ENCODE measurements at regions of chr17 and their contacts with region 1.

Region 1: DNA sequence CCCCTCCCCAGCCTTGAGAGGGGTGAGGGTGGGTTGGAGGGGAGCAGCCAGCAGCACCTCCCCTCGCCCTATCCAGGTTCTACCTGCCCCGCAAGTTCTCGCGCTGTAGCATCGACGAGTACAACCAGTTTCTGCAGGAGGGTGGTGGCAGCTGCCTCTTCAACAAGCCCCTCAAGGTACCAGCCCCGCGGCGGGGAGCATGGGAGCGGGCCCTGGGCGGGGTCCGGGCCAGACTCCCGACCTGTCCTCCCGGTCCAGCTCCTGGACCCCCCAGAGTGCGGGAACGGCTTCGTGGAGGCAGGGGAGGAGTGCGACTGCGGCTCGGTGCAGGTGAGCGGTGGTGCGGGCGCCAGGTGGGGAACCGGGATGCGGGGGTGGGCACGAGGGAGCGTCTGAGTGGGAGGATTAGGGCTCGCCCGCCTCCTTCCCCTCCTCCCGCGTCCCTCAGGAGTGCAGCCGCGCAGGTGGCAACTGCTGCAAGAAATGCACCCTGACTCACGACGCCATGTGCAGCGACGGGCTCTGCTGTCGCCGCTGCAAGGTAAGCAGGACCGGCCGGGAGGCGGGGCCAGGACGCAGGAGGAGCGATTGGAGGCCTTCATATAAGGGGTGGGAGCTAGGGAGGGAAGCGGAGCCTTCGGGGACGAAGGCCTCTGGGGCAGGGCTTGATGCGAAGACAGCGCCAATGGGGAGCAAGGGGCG is 16.5 kb downstream of the ADAM11 start:
- DNase-seq: no peak
- ATAC-seq: peak; percentile 97
- H3K4me3 Mint-ChIP-seq: peak overlapping the region; percentile 77
- H3K27ac Mint-ChIP-seq: no peak overlapping the region
- H3K4me1 Mint-ChIP-seq: peaks cover 7% of the 10 kb centered on the region
- H3K27me3 Mint-ChIP-seq: no peaks in the 10 kb centered on the region

Region 2: DNA sequence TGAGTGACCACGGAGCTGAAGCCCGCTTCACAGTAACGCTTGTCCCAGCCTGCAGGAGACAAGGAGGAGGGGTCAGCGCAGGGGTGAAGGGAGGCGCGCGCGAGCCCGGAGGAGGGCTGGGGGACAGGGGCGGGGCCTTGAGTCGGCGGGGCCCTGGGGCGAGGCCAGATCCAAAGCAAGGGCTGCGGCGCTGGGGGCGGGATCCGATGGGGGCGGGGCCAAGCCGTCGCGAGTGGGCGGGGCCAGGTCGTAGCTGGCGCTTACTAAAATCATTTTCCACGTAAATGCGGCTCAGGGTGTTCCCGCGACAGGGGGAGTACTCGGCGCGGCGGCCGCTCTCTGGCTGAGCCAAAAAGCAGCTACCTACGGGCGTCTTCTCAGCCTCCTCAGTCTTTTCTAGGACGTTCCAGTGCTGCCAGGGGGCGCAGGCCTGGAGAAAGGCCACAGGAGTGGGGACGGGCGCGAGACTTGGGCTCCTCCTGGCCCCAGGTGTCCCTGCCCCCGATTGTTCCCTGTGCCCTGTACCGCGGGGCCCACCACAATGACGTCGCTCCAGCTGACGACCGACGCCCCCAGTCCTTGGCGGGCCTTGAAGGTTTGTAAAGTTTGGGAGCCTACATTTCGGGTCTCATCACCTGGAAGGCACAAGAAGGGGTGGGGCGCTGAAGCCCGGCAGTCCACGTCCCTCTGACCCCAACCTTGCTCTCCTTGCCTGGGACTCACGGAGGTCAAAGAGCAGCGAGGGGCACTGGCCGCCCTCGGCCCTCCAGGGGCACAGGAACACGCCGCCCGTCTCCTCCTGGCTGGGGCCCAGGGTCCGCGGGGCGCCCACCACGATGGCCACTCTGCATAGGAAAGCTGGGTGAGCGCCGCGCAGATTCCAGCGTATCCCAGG is 389.8 kb before region 1 on chr17:
- CTCF ChIA-PET with region 1: no interaction called
- POLR2A ChIA-PET with region 1: no interaction called
- intact Hi-C with region 1: loop called in 1 of 2 experiments (anchors 1 kb)
- DNase-seq: peak; percentile 96
- ATAC-seq: peak; percentile 96
- H3K4me3 Mint-ChIP-seq: peak overlapping the region; percentile 62
- H3K27ac Mint-ChIP-seq: peak overlapping the region; percentile 21
- H3K4me1 Mint-ChIP-seq: peaks cover 12% of the 10 kb centered on the region
- H3K27me3 Mint-ChIP-seq: peaks cover 22% of the 10 kb centered on the region

Region 3: GRCh38 chr17:44797802-44798201 is 22.5 kb after region 1 on chr17:
- CTCF ChIA-PET with region 1: interaction called, 13 read pairs
- POLR2A ChIA-PET with region 1: no interaction called
- intact Hi-C with region 1: no loop called
- DNase-seq: no peak
- ATAC-seq: no peak
- H3K4me3 Mint-ChIP-seq: no peak overlapping the region
- H3K27ac Mint-ChIP-seq: no peak overlapping the region
- H3K4me1 Mint-ChIP-seq: peaks cover 7% of the 10 kb centered on the region
- H3K27me3 Mint-ChIP-seq: no peaks in the 10 kb centered on the region

Region 4: GRCh38 chr17:44864866-44865660 is 89.8 kb after region 1 on chr17:
- CTCF ChIA-PET with region 1: interaction called, 49 read pairs
- POLR2A ChIA-PET with region 1: interaction called, 8 read pairs
- intact Hi-C with region 1: loop called (anchors 1 kb)
- DNase-seq: peak; percentile 79
- ATAC-seq: peak; percentile 84
- H3K4me3 Mint-ChIP-seq: no peak overlapping the region
- H3K27ac Mint-ChIP-seq: no peak overlapping the region
- H3K4me1 Mint-ChIP-seq: no peaks in the 10 kb centered on the region
- H3K27me3 Mint-ChIP-seq: no peaks in the 10 kb centered on the region

Region 5: GRCh38 chr17:44968226-44969143 is 193.2 kb after region 1 on chr17 and contains the start of gene C1QL1:
- CTCF ChIA-PET with region 1: interaction called, 4 read pairs
- POLR2A ChIA-PET with region 1: no interaction called
- intact Hi-C with region 1: loop called in 1 of 2 experiments (anchors 1 kb)
- DNase-seq: peak; percentile 93
- ATAC-seq: peak; percentile 79
- H3K4me3 Mint-ChIP-seq: peak within 1 kb of the TSS; percentile 64
- H3K27ac Mint-ChIP-seq: no peak within 1 kb of the TSS
- H3K4me1 Mint-ChIP-seq: peaks cover 44% of the 10 kb centered on the region
- H3K27me3 Mint-ChIP-seq: peaks cover 41% of the 10 kb centered on the region
- total RNA-seq, gene C1QL1: 0.37 to 0.83 TPM

Region 6: GRCh38 chr17:45161019-45161825 is 385.9 kb after region 1 on chr17:
- CTCF ChIA-PET with region 1: no interaction called
- POLR2A ChIA-PET with region 1: no interaction called
- intact Hi-C with region 1: loop called in 1 of 2 experiments (anchors 1 kb)
- DNase-seq: peak; percentile 97
- ATAC-seq: peak; percentile 97
- H3K4me3 Mint-ChIP-seq: peak overlapping the region; percentile 96
- H3K27ac Mint-ChIP-seq: peak overlapping the region; percentile 96
- H3K4me1 Mint-ChIP-seq: peaks cover 26% of the 10 kb centered on the region
- H3K27me3 Mint-ChIP-seq: no peaks in the 10 kb centered on the region

Region 7: GRCh38 chr17:45172454-45173286 is 397.4 kb after region 1 on chr17:
- CTCF ChIA-PET with region 1: no interaction called
- POLR2A ChIA-PET with region 1: no interaction called
- intact Hi-C with region 1: no loop called
- DNase-seq: peak; percentile 81
- ATAC-seq: peak; percentile 88
- H3K4me3 Mint-ChIP-seq: peak overlapping the region; percentile 69
- H3K27ac Mint-ChIP-seq: peak overlapping the region; percentile 85
- H3K4me1 Mint-ChIP-seq: peaks cover 23% of the 10 kb centered on the region
- H3K27me3 Mint-ChIP-seq: no peaks in the 10 kb centered on the region